Activated naive CD4-positive, alpha-beta T cell treated with anti-CD3 and anti-CD28 coated beads, Interleukin-2, amount 10 ng/mL, durations not matched to agents 7 days and 5 days (primary cell): ENCODE measurements at regions of chr7 and their contacts with region 1.

Region 1: DNA sequence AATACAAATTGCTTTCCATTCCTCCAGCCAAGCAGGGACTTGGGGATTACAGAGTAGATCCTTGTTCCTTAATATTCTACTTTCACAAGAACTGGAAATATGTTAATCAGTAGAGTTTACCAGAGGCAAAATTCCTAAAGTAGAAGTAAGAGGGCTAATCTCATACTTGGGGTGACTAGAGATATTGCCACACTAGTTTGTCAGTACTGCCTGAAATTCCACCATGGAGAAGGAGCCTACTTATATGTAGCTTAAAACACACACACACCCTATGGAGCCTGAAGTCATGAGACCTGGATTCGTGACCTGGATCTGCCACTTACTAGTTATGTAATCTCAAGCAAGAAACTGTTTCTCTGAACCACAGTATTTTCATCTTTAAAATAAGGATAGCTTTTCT is 33.9 kb downstream of the STRIP2 start:
- DNase-seq: no peak
- H3K4me3 Mint-ChIP-seq: no peak overlapping the region
- H3K27ac Mint-ChIP-seq: no peak overlapping the region
- H3K4me1 Mint-ChIP-seq: peaks cover 10% of the 10 kb centered on the region
- H3K27me3 Mint-ChIP-seq: no peaks in the 10 kb centered on the region

Region 2: DNA sequence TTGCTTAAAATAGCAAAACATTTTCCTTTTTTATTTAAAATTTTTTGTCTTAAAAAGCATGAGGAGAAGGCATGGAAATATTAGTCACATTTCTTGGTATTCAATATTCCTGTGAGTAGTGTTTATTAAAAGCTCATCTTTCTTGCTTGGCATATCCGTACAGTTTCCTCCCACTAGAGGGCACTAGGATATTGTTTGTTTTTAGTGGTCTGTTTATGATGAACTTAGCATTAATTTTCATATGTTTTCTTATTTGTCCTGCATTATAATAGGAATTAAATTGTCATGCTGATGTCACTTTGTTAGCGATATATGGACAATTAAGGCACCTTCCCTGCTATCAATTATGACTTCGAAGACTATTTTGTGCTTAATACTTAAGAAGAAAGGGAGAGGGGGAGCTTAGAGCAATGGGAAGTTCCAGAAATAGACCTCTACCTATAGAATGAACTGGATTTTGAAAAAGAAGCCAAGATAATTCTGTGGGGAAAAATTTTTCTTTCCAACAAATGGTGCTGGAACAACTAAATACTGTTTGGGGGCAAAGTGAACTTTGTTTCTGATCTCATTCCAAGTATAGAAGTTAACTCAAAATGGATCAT is 124.9 kb before region 1 on chr7:
- CTCF ChIA-PET with region 1: interaction called, 54 read pairs
- DNase-seq: peak; percentile 23
- H3K4me3 Mint-ChIP-seq: no peak overlapping the region
- H3K27ac Mint-ChIP-seq: peak overlapping the region; percentile 65
- H3K4me1 Mint-ChIP-seq: peaks cover 42% of the 10 kb centered on the region
- H3K27me3 Mint-ChIP-seq: no peaks in the 10 kb centered on the region

Region 3: GRCh38 chr7:129401967-129402860 is 65.9 kb before region 1 on chr7:
- CTCF ChIA-PET with region 1: interaction called, 13 read pairs
- DNase-seq: peak; percentile 29
- H3K4me3 Mint-ChIP-seq: no peak overlapping the region
- H3K27ac Mint-ChIP-seq: no peak overlapping the region
- H3K4me1 Mint-ChIP-seq: peaks cover 12% of the 10 kb centered on the region
- H3K27me3 Mint-ChIP-seq: no peaks in the 10 kb centered on the region

Region 4: GRCh38 chr7:129698516-129699418 is 230.7 kb after region 1 on chr7:
- CTCF ChIA-PET with region 1: no interaction called
- DNase-seq: no peak
- H3K4me3 Mint-ChIP-seq: no peak overlapping the region
- H3K27ac Mint-ChIP-seq: no peak overlapping the region
- H3K4me1 Mint-ChIP-seq: peaks cover 3% of the 10 kb centered on the region
- H3K27me3 Mint-ChIP-seq: no peaks in the 10 kb centered on the region